Aorta (tissue), 5 donors: ENCODE measurements at regions of chr16 and their contacts with region 1.

Region 1: DNA sequence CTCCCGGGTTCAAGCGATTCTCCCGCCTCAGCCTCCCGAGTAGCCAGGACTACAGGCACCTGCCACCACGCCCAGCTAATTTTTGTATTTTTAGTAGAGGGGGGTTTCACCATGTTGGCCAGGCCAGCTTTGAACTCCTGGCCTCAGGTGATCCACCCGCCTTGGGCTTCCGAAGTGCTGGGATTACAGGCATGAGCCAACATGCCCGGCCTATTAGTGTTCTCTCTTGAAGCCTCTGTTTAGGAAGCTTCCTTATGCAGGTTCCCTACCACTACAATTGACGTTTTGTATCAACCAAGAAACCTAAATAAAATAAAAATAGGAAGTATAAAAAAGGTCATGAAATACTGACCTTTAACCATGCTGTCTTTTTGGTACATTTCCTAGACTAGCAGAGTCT is 16.0 kb downstream of the CHST5 start:
- DNase-seq: peak in 1 of 2 donors; percentile 31
- ATAC-seq: no peak
- H3K4me3 ChIP-seq: no peak overlapping the region
- H3K27ac ChIP-seq: no peak overlapping the region
- H3K4me1 ChIP-seq: no peaks in the 10 kb centered on the region
- H3K27me3 ChIP-seq: no peaks in the 10 kb centered on the region

Region 2: GRCh38 chr16:75198135-75198600 is 321.7 kb before region 1 on chr16:
- intact Hi-C with region 1: loop called in 1 of 2 experiments (anchors 5 kb)
- DNase-seq: peak in 1 of 2 donors; percentile 59
- ATAC-seq: no peak
- H3K4me3 ChIP-seq: no peak overlapping the region
- H3K27ac ChIP-seq: no peak overlapping the region
- H3K4me1 ChIP-seq: no peaks in the 10 kb centered on the region
- H3K27me3 ChIP-seq: no peaks in the 10 kb centered on the region

Region 3: GRCh38 chr16:75279305-75279704 is 240.6 kb before region 1 on chr16:
- intact Hi-C with region 1: no loop called
- DNase-seq: peak in 1 of 2 donors; percentile 44
- ATAC-seq: no peak
- H3K4me3 ChIP-seq: no peak overlapping the region
- H3K27ac ChIP-seq: no peak overlapping the region
- H3K4me1 ChIP-seq: no peaks in the 10 kb centered on the region
- H3K27me3 ChIP-seq: no peaks in the 10 kb centered on the region

Region 4: GRCh38 chr16:75471723-75472633 is 47.9 kb before region 1 on chr16:
- intact Hi-C with region 1: loop called (anchors 1 kb)
- DNase-seq: peak in 1 of 2 donors; percentile 54
- ATAC-seq: peak; percentile 93
- H3K4me3 ChIP-seq: no peak overlapping the region
- H3K27ac ChIP-seq: no peak overlapping the region
- H3K4me1 ChIP-seq: no peaks in the 10 kb centered on the region
- H3K27me3 ChIP-seq: no peaks in the 10 kb centered on the region

Region 5: DNA sequence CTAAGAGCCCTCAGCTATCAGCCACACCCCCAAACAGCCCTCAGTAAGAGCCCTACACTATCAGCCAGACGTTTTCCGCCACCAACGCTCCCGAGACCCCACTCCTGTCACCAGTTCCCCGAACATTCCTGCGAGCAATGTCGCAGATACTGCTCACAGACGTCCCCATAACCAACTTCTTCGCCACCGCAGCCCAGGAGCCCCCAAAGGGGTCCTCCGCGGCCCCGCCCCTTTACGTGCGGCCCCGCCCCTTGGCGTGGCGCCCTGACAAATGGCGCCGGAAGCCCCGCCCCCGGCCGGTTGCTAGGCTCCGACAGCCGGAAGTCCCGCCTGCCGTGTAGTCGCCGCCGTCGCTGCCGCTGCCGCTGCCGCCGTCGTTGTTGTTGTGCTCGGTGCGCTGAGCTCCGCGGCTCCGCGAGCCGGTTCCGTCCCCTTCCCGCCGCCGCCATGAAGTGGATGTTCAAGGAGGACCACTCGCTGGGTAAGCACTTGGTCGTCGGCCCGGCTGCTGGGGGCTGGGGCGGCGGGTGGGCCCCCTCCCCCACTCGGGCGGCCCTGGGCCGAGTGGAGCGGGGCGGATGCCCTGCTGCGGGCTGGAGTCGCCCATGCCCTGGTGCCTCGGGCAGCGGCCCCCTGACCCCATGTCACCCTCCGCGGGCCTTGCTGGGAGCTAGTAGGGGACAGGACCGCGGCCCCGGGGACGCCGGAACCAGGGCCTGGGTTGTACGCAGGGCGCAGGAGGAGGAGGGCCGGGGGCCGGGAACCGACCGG is 46.3 kb after region 1 on chr16 and contains the start of gene GABARAPL2:
- intact Hi-C with region 1: loop called (anchors 5 kb)
- DNase-seq: peak; percentile 88 to 94
- ATAC-seq: peak; percentile 95
- H3K4me3 ChIP-seq: peak within 1 kb of the TSS; percentile 85 to 92
- H3K27ac ChIP-seq: peak within 1 kb of the TSS in 1 of 2 donors; percentile 16
- H3K4me1 ChIP-seq: peaks cover 0 to 7% of the 10 kb centered on the region in 2 donors
- H3K27me3 ChIP-seq: no peaks in the 10 kb centered on the region
- total RNA-seq, gene GABARAPL2: 106 to 154 TPM

Region 6: DNA sequence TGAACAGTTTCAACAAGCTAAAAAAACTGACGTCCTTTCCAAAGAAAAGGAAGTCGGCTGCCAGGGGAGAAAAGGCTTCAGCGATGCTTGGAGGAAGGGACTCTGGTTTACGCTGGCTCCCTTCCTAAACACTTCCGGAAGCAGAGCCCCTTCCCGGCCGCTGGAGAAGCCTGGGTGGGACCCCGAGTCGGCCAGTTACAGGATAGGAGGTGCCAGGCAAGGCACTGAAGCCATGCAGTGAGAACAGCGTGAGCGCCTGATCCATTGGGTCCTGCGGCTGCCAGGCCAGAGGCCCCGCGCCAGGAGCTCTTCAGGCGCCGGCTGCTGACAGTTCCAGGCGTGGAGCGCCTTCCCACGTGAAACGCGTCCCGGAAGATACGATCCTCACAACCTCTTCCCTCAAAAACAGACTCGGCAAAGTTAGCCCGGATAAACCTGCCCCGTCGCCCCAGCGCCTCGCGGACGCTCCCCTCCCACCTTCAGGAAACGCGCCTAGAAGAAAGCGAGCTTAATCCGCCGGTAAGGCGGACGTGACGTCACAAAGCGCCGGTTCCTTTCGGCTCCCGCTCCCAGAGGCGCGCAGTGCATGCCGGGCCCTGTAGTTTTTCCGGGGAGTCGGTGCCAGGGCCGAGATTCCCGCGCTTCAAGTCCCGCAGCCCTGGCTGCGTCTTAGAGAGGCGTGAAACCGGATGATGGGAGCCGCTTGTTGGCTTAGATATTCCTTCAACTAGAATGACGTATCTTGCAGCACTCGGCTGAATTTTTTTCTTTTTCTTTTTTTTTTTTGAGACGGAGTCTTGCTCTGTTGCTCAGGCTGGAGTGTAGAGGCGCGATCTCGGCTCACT is 103.1 kb after region 1 on chr16 and contains the start of gene ADAT1:
- intact Hi-C with region 1: loop called in 1 of 2 experiments (anchors 2 kb)
- DNase-seq: peak; percentile 99 to 100
- ATAC-seq: peak; percentile 97
- H3K4me3 ChIP-seq: peak within 1 kb of the TSS; percentile 46 to 51
- H3K27ac ChIP-seq: peak within 1 kb of the TSS; percentile 40 to 73
- H3K4me1 ChIP-seq: peaks cover 0 to 3% of the 10 kb centered on the region in 2 donors
- H3K27me3 ChIP-seq: no peaks in the 10 kb centered on the region
- total RNA-seq, gene ADAT1: 25.4 to 44.0 TPM

Region 7: GRCh38 chr16:75710344-75710743 is 190.5 kb after region 1 on chr16:
- intact Hi-C with region 1: no loop called
- DNase-seq: no peak
- ATAC-seq: no peak
- H3K4me3 ChIP-seq: no peak overlapping the region
- H3K27ac ChIP-seq: no peak overlapping the region
- H3K4me1 ChIP-seq: no peaks in the 10 kb centered on the region
- H3K27me3 ChIP-seq: no peaks in the 10 kb centered on the region